Adrenal gland (tissue), 19 donors: ENCODE measurements at regions of chr19 and their contacts with region 1.

Region 1: DNA sequence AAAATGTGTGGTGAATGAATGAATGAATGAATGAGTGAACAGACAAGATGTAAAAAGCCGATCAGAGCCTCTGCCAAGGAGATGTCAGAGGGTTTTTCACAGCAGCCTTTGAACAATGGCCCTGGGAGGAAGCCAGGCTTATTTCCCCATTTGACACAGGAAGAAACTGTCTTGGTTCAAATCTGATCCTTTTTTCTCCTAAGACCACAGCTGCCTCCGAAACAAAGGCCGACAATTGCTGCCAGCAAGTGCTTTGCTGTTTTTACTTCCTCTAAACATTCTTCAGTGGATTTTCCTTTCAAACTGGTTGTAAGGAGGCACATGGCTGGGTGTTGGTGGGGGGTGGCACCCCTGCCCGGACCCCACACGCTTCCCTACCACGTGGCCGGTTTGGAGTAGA is 44.2 kb upstream of the HOMER3 start:
- DNase-seq: peak; percentile 22 to 76 (median 43)
- H3K4me3 ChIP-seq: no peak overlapping the region
- H3K27ac ChIP-seq: peak overlapping the region in 2 of 5 donors; percentile 60 to 65
- H3K4me1 ChIP-seq: peaks cover 3 to 8% of the 10 kb centered on the region in 2 donors
- H3K27me3 ChIP-seq: peaks cover 4% of the 10 kb centered on the region
- CTCF ChIP-seq: no peak
- POLR2A ChIP-seq: no peak

Region 2: DNA sequence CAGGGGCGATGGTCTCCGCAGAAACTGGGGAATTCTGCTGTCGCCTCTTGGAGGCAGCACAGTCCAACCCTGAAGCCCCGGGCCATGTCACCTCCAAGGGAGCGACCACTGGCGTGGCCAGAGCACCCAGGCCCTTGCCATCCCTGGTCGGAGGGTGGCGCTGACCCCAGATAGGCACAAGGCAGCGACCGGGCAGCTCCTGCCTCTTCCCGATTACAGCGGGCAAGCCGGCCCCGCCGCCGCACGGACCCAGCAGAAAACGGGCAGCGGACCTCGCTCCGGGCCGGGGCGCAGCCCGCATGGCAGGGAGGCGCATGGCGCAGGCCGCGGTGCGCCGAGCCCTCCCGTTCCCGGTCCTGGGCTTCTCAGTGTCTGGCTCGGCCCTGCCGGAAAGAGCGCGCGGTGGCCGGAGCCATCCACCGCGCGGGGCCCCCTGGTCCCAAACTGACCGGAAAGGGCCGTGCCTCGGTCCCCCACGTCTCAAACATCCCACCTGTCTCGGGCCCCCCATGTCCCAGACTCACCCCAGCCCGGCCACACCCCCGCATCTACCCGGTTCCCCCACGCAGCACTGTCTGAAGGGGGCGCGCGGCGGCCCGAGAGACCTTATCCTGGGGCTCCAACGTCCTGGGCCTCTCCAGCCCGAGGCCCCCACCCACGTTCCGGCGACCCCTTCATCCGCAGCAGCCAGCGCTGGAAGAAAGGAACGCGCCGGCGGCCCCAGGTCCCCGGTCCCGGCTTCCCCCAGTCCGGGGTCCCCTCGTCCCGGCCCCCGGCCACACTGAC is 90.0 kb before region 1 on chr19:
- intact Hi-C with region 1: loop called in 1 of 2 experiments (anchors 10 kb)
- DNase-seq: peak in 5 of 7 donors; percentile 42 to 75 (median 64)
- H3K4me3 ChIP-seq: peak overlapping the region in 1 of 4 donors; percentile 21
- H3K27ac ChIP-seq: no peak overlapping the region
- H3K4me1 ChIP-seq: peaks cover 0 to 6% of the 10 kb centered on the region in 2 donors
- H3K27me3 ChIP-seq: peaks cover 5% of the 10 kb centered on the region
- CTCF ChIP-seq: peak in 5 of 6 experiments; percentile 25 to 45 (median 36)
- POLR2A ChIP-seq: no peak

Region 3: DNA sequence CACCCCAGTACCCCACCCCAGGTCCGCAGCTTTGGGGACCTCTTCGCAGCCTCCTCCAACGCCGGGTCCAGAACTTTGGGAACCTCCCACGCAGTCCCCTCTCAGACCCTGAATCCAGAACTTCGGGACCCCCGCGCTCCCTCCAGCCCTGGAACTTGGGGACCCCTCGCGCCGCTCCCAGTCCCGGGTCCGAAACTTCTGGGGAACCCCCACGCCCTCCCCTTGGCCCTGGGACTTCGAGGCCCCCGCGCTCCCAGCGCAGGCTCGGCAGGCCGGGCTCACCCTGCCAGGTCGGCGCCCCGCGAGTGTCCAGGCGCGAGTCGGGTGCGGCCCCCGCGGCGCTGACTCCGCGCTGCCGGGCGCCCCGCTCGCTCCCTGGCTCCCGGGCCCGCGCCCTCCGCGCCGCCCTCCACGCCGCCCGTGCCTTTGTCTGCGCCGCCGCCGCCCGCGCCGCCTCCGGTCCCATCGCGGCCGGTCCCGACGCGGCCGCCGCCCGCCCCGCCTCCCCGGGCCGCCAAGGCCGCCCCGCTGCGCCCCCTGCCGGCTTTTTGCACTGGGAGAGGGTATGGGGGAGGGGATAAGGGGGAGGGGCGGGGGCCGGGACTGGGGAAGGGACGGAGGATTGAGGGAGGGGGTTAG is 44.4 kb before region 1 on chr19 and contains the start of gene HOMER3:
- intact Hi-C with region 1: loop called in 1 of 2 experiments (anchors 5 kb)
- DNase-seq: peak; percentile 63 to 86 (median 79)
- H3K4me3 ChIP-seq: peak within 1 kb of the TSS; percentile 35 to 75 (median 56)
- H3K27ac ChIP-seq: peak within 1 kb of the TSS in 3 of 5 donors; percentile 47 to 82 (median 66)
- H3K4me1 ChIP-seq: peaks cover 0 to 14% of the 10 kb centered on the region in 2 donors
- H3K27me3 ChIP-seq: no peaks in the 10 kb centered on the region
- CTCF ChIP-seq: peak in 1 of 6 experiments; percentile 38
- POLR2A ChIP-seq: peak; percentile 15 to 35
- total RNA-seq, gene HOMER3: 20.7 to 97.1 (median 34.1) TPM